HEK293T (cell line): ENCODE measurements at regions of chr22 and their contacts with region 1.

Region 1: DNA sequence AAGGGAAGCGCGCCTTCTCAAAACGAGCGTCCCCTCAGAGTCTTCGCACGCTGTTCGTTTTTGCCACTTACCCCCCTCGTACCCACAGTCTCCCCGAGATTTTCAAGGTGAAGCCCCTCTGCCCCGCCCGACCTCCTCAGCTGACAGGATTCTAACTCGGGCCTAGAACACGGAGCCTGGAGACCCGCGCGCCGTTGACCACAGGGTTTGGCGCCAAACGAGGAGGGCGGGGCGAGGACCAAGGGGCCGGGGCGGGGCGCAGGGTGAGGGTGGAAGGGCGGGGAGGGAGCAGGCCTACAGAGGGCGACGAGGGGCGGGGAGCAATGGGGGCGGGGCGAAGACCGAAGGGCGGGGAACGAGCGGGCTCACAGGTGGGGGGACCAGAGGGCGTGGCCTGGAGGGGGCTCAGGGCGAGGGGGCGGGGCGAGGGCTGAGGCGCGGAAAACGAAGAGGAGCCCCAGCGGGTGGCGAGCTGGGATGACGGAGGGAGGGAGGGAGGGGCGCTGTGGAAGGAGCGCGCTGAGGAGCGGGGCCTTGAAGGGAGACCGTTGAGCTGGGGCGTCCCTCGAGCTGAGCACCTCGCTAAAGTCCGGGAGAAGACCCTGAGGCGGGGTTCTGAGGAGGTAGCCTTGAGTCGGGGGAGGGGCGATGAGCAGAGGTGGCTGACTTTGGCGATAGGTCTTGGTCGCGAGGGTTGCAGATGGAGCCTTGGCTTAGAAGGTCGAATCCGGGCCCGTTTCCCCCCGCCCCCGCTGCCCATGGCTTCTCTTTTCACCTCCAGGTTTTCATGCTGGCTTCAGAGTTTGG is at the start of gene DMC1:
- DNase-seq: peak; percentile 100

Region 2: DNA sequence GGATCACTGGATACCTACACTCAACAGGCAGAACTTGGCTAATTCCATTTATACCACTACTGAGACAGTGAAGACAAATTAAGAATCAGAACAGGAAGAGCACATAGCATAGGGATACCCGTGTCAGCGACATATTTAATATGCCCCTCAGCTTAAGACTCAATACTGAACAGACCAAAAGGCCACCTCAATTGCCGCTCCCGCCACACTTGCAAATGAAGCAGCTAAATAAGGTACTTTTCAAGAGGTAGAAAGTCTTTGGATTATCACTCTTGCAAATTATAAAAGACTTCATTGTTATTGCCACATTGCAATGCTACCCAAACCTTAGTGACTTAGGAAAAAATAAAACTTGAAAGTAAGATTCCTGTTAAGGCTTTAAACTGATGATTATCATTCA is 67.2 kb before region 1 on chr22:
- CTCF ChIA-PET with region 1: interaction called, 3 read pairs
- POLR2A ChIA-PET with region 1: interaction called, 12 read pairs
- DNase-seq: no peak

Region 3: GRCh38 chr22:38608992-38609750 is 39.0 kb after region 1 on chr22:
- CTCF ChIA-PET with region 1: no interaction called
- POLR2A ChIA-PET with region 1: no interaction called
- DNase-seq: no peak